PC-9 (cell line): ENCODE measurements at regions of chr7 and their contacts with region 1.

Region 1: DNA sequence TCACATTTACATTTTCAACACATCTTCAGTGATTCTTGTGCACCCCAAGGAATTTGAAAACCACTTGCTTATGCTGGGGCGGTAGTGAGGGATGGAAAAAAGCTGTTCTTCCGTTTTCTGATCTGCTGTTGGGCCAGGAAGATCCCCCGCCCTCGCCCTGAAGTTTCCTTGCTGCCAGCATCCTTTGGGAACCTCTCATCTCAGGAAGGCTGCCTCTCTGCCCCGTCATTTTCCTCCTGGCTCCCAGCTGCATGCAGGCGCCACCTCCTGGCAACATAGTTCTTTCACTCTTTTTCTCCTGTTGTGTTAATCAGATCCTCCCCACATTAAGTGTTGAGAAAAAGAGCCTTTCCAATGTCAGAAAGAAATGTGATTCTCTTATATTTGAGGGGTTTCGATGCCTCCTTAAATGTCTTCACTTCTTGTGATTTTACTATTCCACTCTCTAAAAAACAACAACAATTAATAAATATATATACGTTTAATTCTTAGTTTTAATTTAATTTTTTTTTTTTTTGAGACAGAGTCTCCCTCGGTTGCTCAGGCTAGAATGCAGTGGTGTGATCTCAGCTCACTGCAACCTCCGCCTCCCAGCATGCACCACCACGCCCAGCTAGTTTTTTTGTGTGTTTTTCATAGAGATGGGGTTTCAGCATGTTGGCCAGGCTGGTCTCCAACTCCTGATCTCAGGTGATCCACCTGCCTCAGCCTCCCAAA is 122.9 kb downstream of the RALA start:
- DNase-seq: peak; percentile 57 to 73
- H3K4me3 ChIP-seq: no peak overlapping the region
- H3K27ac ChIP-seq: no peak overlapping the region
- H3K4me1 ChIP-seq: peaks cover 6% of the 10 kb centered on the region
- H3K27me3 ChIP-seq: no peaks in the 10 kb centered on the region
- CTCF ChIP-seq: peak; percentile 94

Region 2: GRCh38 chr7:39574673-39575349 is 171.4 kb before region 1 on chr7:
- CTCF ChIA-PET with region 1: interaction called, 38 read pairs
- POLR2A ChIA-PET with region 1: interaction called, 16 read pairs
- intact Hi-C with region 1: loop called (anchors 1 kb)
- DNase-seq: no peak
- H3K4me3 ChIP-seq: no peak overlapping the region
- H3K27ac ChIP-seq: no peak overlapping the region
- H3K4me1 ChIP-seq: no peaks in the 10 kb centered on the region
- H3K27me3 ChIP-seq: no peaks in the 10 kb centered on the region
- CTCF ChIP-seq: no peak

Region 3: GRCh38 chr7:39580149-39580874 is 165.9 kb before region 1 on chr7:
- CTCF ChIA-PET with region 1: interaction called, 38 read pairs
- POLR2A ChIA-PET with region 1: interaction called, 16 read pairs
- intact Hi-C with region 1: loop called (anchors 1 kb)
- DNase-seq: peak; percentile 75 to 81
- H3K4me3 ChIP-seq: no peak overlapping the region
- H3K27ac ChIP-seq: no peak overlapping the region
- H3K4me1 ChIP-seq: no peaks in the 10 kb centered on the region
- H3K27me3 ChIP-seq: no peaks in the 10 kb centered on the region
- CTCF ChIP-seq: peak; percentile 97

Region 4: DNA sequence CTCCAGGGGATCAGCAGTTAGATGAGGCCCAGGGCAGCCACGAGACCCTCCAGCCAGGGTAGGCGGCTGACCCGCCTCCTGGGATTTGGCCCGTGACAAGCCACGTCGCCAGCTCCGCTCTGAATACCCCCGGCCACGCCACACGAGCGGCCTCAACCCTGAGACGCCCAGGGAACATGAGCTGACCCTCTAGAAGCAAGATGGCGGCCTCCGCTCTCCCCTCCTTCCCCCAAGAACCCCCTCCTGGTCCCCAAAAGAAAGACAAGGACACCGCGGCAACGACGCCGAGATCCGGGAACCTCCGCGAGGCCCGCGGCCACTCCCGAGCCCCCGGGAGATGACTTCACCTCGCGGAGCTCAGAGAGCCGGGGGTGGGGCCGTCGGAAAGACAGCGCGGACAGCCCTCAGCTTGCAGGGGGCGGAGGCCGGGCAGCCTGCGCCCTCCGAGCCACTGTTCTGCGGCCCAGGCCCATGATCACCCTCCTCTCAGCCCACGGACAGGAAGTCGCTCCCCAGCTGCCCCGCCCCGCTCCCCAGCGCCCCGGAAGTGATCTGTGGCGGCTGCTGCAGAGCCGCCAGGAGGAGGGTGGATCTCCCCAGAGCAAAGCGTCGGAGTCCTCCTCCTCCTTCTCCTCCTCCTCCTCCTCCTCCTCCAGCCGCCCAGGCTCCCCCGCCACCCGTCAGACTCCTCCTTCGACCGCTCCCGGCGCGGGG is 123.1 kb before region 1 on chr7 and contains the start of gene RALA:
- CTCF ChIA-PET with region 1: interaction called, 3 read pairs
- POLR2A ChIA-PET with region 1: interaction called, 9 read pairs
- intact Hi-C with region 1: loop called (anchors 1 kb)
- DNase-seq: peak; percentile 90 to 96
- H3K4me3 ChIP-seq: peak within 1 kb of the TSS; percentile 75
- H3K27ac ChIP-seq: peak within 1 kb of the TSS; percentile 87
- H3K4me1 ChIP-seq: peaks cover 42% of the 10 kb centered on the region
- H3K27me3 ChIP-seq: no peaks in the 10 kb centered on the region
- CTCF ChIP-seq: no peak
- total RNA-seq, gene RALA: 34.3 and 36.8 TPM in 2 replicates

Region 5: DNA sequence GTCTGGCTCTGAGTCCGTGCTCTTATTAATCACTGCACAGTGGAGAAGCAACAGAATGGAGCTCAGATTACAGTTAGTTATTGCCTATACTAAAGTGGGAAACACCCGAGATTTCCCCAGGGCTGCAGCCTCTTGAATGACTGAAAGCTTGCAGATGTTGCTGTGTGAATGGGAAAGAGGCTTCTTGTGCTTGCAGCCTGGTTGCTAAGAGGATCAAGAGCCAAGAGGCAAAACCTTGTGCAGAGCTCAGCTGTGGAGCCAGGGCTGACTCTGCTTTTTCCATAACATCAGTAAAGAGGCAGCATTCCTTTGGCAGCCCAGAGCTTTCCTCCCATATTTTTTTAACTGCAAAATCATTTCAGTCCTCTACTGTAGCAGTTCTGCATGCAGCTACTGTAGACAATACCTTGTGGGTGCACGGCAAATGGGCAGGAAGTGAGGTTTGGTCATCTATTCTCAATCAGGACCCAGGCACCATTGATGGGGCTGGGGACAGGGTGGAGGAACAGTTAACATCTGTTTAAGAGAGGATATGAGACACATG is 36.4 kb before region 1 on chr7:
- CTCF ChIA-PET with region 1: no interaction called
- POLR2A ChIA-PET with region 1: no interaction called
- intact Hi-C with region 1: no loop called
- DNase-seq: no peak
- H3K4me3 ChIP-seq: no peak overlapping the region
- H3K27ac ChIP-seq: no peak overlapping the region
- H3K4me1 ChIP-seq: no peaks in the 10 kb centered on the region
- H3K27me3 ChIP-seq: no peaks in the 10 kb centered on the region
- CTCF ChIP-seq: no peak